HEK293 (cell line): ENCODE measurements at regions of chr6 and their contacts with region 1.

Region 1: DNA sequence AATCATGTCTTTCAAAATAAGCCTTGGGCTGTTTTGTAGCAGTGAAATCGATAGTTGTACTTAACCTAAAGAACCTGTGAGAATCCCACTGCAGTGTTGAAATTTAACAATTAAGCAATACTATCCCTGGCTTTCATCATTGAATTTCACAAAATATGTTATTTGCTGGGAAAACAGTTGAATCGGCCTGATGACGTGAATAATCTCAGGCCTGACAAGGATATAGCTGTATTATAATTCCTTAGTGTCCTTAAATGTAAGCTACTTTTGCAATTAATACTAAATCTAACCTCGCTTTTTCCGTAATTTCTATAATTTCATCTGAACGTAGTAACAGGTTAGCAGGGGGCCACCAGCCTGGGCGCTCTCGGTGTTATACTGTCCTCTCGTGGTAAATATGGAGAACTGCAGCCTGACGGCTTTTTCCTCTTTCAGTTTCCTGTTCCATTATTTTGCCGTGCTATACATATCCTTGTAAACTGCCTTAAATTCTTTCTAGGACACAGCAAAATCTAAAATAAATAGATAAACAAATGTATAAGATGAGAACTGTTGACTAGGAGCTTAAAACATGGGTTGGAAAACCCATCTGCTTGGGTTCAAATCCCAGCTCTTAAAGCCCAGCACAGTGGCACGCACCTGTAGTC is 24.0 kb downstream of the MTFR2 start:
- H3K4me3 ChIP-seq: no peak overlapping the region
- H3K27ac ChIP-seq: no peak overlapping the region
- H3K4me1 ChIP-seq: no peaks in the 10 kb centered on the region
- CTCF ChIP-seq: peak; percentile 86

Region 2: GRCh38 chr6:135506270-135506997 is 719.7 kb before region 1 on chr6:
- CTCF ChIA-PET with region 1: interaction called, 42 read pairs
- POLR2A ChIA-PET with region 1: no interaction called
- H3K4me3 ChIP-seq: no peak overlapping the region
- H3K27ac ChIP-seq: no peak overlapping the region
- H3K4me1 ChIP-seq: peaks cover 3% of the 10 kb centered on the region; the same call in 1 of the 2 replicates
- CTCF ChIP-seq: 0 out of 2 replicates have a peak, but pooled peaks have one; percentile 13

Region 3: GRCh38 chr6:135675862-135676261 is 550.3 kb before region 1 on chr6:
- CTCF ChIA-PET with region 1: interaction called, 34 read pairs
- POLR2A ChIA-PET with region 1: no interaction called
- H3K4me3 ChIP-seq: no peak overlapping the region
- H3K27ac ChIP-seq: no peak overlapping the region
- H3K4me1 ChIP-seq: no peaks in the 10 kb centered on the region
- CTCF ChIP-seq: peak; percentile 69

Region 4: DNA sequence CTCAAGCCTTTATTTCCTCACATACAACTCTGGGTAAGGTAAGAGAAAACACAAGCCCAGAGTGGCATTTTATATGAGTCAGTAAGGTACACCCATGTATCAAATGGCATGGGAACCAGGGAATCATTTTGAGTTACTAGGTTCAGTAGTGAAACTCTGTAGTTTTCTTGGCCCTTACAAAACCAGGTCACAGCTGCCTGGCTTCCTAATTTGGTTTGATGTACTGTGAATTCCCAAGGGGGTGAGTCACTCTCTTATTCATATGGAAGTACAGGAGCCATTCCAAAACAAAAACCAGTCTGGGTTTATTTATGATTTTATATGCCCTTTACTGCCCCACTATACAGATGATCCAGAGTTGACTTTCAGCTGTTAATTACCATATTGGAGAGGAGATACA is 304.0 kb before region 1 on chr6:
- CTCF ChIA-PET with region 1: interaction called, 25 read pairs
- POLR2A ChIA-PET with region 1: no interaction called
- H3K4me3 ChIP-seq: no peak overlapping the region
- H3K27ac ChIP-seq: no peak overlapping the region
- H3K4me1 ChIP-seq: peaks cover 7% of the 10 kb centered on the region
- CTCF ChIP-seq: no peak

Region 5: DNA sequence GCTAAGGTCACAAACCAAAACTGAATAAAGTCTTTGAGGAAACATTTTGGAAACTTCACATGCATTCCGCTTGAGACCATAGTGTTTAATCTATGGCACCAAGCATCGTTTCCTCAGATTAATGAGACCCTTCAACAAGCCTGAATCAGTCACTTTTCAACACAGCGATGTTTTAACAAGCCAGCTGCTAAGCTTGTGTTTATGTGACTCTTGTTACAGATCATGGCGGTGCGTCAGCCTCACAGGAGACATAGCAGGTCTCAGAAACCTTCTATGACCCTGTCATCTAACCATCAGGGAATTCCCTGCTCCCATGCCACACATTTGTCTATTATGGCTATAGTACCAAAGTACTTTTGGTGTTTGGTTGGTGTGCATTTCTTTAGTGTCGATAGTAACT is 33.2 kb before region 1 on chr6:
- CTCF ChIA-PET with region 1: interaction called, 26 read pairs
- POLR2A ChIA-PET with region 1: no interaction called
- H3K4me3 ChIP-seq: no peak overlapping the region
- H3K27ac ChIP-seq: no peak overlapping the region
- H3K4me1 ChIP-seq: no peaks in the 10 kb centered on the region
- CTCF ChIP-seq: no peak

Region 6: DNA sequence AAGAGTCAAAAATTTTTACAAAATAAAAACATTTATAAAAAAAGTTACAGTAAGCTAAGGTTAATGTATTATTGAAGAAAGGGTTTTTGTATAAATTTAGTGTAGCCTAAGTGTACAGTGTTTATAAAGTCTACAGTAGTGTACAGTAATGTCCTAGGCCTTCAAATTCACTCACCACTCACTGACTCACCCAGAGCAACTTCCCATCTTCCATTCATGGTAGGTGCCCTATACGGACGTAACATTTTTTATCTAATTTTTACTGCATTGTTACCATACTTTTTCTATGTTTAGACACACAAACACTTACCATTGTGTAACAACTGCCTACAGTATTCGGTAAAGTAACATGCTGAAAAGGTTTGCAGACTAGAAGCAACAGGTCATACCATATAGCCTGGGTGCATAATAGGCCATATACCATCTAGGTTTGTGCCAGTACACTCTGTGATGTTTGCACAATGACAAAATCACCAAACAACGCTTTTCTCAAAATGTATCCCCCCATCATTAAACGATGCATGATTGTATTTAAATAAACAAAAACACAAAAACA is 18.0 kb after region 1 on chr6:
- CTCF ChIA-PET with region 1: interaction called, 32 read pairs
- POLR2A ChIA-PET with region 1: no interaction called
- H3K4me3 ChIP-seq: no peak overlapping the region
- H3K27ac ChIP-seq: no peak overlapping the region
- H3K4me1 ChIP-seq: 0 out of 2 replicates have a peak, but pooled peaks cover 4% of the 10 kb centered on the region
- CTCF ChIP-seq: no peak

Region 7: DNA sequence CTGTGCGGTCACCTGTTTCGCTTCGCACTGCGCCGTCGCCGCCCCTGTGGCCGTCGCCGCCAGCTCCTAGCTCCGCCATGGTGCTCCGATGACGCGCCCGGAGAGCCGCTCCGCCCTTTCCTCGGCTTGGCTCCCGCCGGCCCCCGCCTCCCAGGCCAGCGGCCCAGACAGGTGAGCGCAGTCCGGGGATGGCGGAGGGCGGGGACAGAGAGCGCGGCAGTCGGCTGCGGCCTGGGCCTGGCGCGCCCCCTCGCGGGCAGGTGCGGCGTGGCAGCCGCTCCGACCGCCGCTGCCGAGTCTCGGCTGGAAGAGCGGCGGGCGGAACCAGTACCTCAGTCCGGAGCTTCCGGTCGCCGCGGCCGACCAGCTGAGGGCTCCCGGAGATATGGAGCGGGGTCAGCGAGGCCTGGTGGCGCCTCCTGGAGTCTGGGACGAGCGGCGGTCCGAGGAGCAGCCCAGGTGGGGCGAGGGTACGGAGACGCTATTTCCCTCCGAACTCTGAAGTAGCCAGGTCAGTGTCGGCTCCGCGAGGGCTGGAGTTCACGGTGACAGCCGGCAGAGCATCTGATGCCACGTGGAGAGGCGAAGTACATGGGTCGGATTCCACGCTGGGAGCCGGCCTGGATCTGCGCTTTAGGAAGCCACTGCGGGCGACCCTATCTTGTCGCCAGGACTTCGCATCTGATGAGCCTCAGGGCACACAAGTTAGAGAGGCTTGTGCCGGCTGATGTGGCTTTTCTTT is 324.4 kb after region 1 on chr6 and contains the start of gene MAP7:
- CTCF ChIA-PET with region 1: interaction called, 12 read pairs
- POLR2A ChIA-PET with region 1: interaction called, 3 read pairs
- H3K4me3 ChIP-seq: peak within 1 kb of the TSS; percentile 90
- H3K27ac ChIP-seq: peak within 1 kb of the TSS; percentile 82; the same call in 1 of the 2 replicates
- H3K4me1 ChIP-seq: peaks cover 10% of the 10 kb centered on the region
- CTCF ChIP-seq: 0 out of 2 replicates have a peak, but pooled peaks have one; percentile 46